ENCODE measurements at regions of chr1 and their contacts with region 1.

Region 1: DNA sequence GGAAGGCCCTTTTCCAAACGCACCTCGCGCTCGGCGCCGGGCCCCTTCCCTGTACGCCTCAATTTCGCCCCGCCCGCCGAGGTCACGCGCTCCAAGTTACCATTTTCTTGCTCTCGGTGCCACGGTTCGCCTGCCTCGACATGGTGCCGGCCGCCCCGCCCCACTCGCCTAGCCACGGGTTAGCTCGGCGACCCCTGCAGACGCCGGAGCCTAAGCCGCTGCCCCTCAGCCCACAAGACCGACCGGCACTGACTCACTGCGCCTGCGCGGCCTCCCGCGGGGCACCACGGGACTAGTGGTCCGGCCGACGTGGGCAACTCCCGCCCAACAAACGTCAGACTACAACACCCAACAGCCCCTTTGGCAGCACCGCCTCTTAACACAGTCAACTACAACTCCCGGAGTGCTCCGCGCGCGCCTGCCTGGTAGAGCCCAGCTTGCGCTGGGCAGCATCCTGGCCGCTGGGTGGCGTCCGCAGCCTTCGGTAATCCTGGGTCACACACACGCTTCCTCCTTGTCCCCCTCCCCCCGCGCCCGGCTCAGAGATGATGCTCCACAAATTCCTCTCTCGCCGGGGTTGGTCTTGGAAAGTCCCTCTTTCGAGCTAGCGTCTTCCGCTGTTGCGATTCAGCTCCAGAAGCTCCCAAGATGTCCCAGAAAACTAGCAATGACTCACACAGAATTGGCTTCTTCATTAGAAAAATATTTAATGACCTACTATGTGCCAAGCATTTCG is at the start of gene TRAPPC3:
- DNase-seq: peak; percentile 100
- H3K4me3 ChIP-seq: peak within 1 kb of the TSS; percentile 46 to 84 (median 71)
- H3K27ac ChIP-seq: peak within 1 kb of the TSS; percentile 98
- H3K4me1 ChIP-seq: peaks cover 31% of the 10 kb centered on the region
- H3K27me3 ChIP-seq: no peaks in the 10 kb centered on the region
- CTCF ChIP-seq: peak; percentile 99
- POLR2A ChIP-seq: peak; percentile 89
- total RNA-seq, gene TRAPPC3: 87.7 and 93.4 TPM in 2 replicates

Region 2: GRCh38 chr1:36008546-36009197 is 140.7 kb before region 1 on chr1:
- CTCF ChIA-PET with region 1: no interaction called
- POLR2A ChIA-PET with region 1: no interaction called
- dilution Hi-C with region 1: no loop called
- intact Hi-C with region 1: no loop called
- DNase-seq: peak; percentile 82
- H3K4me3 ChIP-seq: no peak overlapping the region
- H3K27ac ChIP-seq: peak overlapping the region; percentile 96
- H3K4me1 ChIP-seq: peaks cover 17% of the 10 kb centered on the region
- H3K27me3 ChIP-seq: no peaks in the 10 kb centered on the region
- CTCF ChIP-seq: no peak
- POLR2A ChIP-seq: no peak

Region 3: GRCh38 chr1:36115931-36116330 is 33.5 kb before region 1 on chr1:
- CTCF ChIA-PET with region 1: no interaction called
- POLR2A ChIA-PET with region 1: no interaction called
- dilution Hi-C with region 1: no loop called
- intact Hi-C with region 1: no loop called
- DNase-seq: no peak
- H3K4me3 ChIP-seq: no peak overlapping the region
- H3K27ac ChIP-seq: no peak overlapping the region
- H3K4me1 ChIP-seq: no peaks in the 10 kb centered on the region
- H3K27me3 ChIP-seq: no peaks in the 10 kb centered on the region
- CTCF ChIP-seq: no peak
- POLR2A ChIP-seq: no peak

Region 4: GRCh38 chr1:36134505-36135329 is 14.7 kb before region 1 on chr1:
- CTCF ChIA-PET with region 1: interaction called, 37 read pairs
- POLR2A ChIA-PET with region 1: interaction called, 5 read pairs
- dilution Hi-C with region 1: no loop called
- intact Hi-C with region 1: loop called (anchors 1 kb)
- DNase-seq: peak; percentile 54
- H3K4me3 ChIP-seq: no peak overlapping the region
- H3K27ac ChIP-seq: peak overlapping the region; percentile 95
- H3K4me1 ChIP-seq: peaks cover 42% of the 10 kb centered on the region
- H3K27me3 ChIP-seq: no peaks in the 10 kb centered on the region
- CTCF ChIP-seq: peak; percentile 81 to 82
- POLR2A ChIP-seq: peak; percentile 64

Region 5: GRCh38 chr1:36187800-36188593 is 38.6 kb after region 1 on chr1:
- CTCF ChIA-PET with region 1: interaction called, 201 read pairs
- POLR2A ChIA-PET with region 1: interaction called, 12 read pairs
- dilution Hi-C with region 1: no loop called
- intact Hi-C with region 1: loop called (anchors 1 kb)
- DNase-seq: peak; percentile 92
- H3K4me3 ChIP-seq: no peak overlapping the region
- H3K27ac ChIP-seq: peak overlapping the region; percentile 46
- H3K4me1 ChIP-seq: peaks cover 6% of the 10 kb centered on the region
- H3K27me3 ChIP-seq: no peaks in the 10 kb centered on the region
- CTCF ChIP-seq: peak; percentile 83 to 89
- POLR2A ChIP-seq: peak; percentile 65

Region 6: DNA sequence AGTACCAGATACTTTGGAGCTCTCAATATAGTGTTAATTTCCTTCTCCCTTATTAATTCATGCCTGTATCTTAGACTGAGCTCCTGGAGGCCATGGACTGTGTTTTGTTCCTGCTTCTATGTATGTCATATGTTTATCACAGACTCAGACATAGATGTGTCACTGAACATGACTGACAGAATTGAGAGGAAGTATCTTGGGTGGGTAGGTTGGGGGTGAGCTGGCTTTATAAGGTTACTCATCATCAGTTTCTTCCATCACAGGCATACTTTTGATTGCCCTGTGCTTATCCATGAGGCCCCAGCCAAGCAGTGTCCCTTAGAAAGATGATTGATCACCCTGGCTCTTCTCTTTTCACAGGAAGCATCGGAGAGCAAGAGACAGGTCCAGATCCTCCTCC is 151.1 kb after region 1 on chr1:
- CTCF ChIA-PET with region 1: interaction called, 17 read pairs
- POLR2A ChIA-PET with region 1: interaction called, 3 read pairs
- dilution Hi-C with region 1: no loop called
- intact Hi-C with region 1: loop called (anchors 5 kb)
- DNase-seq: no peak
- H3K4me3 ChIP-seq: no peak overlapping the region
- H3K27ac ChIP-seq: peak overlapping the region; percentile 1
- H3K4me1 ChIP-seq: peaks cover 15% of the 10 kb centered on the region
- H3K27me3 ChIP-seq: no peaks in the 10 kb centered on the region
- CTCF ChIP-seq: no peak
- POLR2A ChIP-seq: no peak

Region 7: DNA sequence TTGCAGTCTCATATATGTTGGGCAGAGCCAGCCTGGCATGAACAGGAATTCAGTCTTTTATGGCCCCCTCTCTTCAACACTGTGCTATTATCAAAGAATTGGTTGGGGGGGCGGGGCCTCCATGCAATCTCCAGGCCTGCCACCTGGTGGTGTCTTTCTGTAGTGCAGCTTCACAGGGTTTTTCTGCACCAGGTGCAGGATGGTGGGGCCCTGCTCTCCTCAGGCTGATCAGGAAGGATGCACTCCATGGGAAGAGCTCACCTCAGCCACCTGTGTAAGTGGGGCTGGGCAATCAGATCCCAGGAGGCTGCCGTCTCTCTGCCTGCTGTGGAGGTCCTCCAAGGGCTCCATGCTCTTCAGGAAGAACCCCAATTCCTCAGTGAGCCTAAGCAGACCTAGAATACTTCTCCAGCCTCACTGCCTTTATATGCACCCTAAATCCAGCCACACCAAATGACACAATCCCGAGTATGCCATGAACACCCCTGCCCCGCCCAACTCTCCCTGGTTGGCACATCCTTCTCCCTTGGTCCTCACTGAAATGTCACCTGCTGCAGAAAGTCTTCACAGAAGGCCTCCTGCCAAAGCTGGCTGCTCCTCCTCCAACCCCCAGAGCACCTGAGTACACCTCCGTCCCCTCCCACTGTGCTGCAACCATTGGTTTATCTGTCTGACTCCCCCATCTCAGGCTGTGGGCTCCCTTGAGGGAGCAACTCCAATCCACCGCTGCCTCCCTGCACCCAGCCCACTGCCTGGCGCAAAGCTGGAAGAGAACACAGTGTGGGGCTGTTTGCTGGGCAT is 219.9 kb after region 1 on chr1:
- CTCF ChIA-PET with region 1: no interaction called
- POLR2A ChIA-PET with region 1: no interaction called
- dilution Hi-C with region 1: no loop called
- intact Hi-C with region 1: loop called (anchors 1 kb)
- DNase-seq: peak; percentile 77
- H3K4me3 ChIP-seq: no peak overlapping the region
- H3K27ac ChIP-seq: peak overlapping the region; percentile 54
- H3K4me1 ChIP-seq: peaks cover 47% of the 10 kb centered on the region
- H3K27me3 ChIP-seq: no peaks in the 10 kb centered on the region
- CTCF ChIP-seq: peak; percentile 89 to 91
- POLR2A ChIP-seq: no peak

Region 8: GRCh38 chr1:36594023-36594422 is 444.6 kb after region 1 on chr1:
- CTCF ChIA-PET with region 1: no interaction called
- POLR2A ChIA-PET with region 1: no interaction called
- dilution Hi-C with region 1: no loop called
- intact Hi-C with region 1: no loop called
- DNase-seq: no peak
- H3K4me3 ChIP-seq: no peak overlapping the region
- H3K27ac ChIP-seq: no peak overlapping the region
- H3K4me1 ChIP-seq: no peaks in the 10 kb centered on the region
- H3K27me3 ChIP-seq: peaks cover 0 to 8% of the 10 kb centered on the region in 2 experiments
- CTCF ChIP-seq: no peak
- POLR2A ChIP-seq: no peak